Activated CD4-positive, alpha-beta memory T cell treated with anti-CD3 and anti-CD28 coated beads for 36 hours (primary cell): ENCODE measurements at regions of chr2 and their contacts with region 1.

Region 1: GRCh38 chr2:64214281-64215115 is 70.3 kb upstream of the PELI1 start:
- DNase-seq: peak; percentile 59
- H3K4me3 Mint-ChIP-seq: peak overlapping the region; percentile 63
- H3K27ac Mint-ChIP-seq: peak overlapping the region; percentile 97
- H3K4me1 Mint-ChIP-seq: peaks cover 56% of the 10 kb centered on the region
- H3K27me3 Mint-ChIP-seq: no peaks in the 10 kb centered on the region

Region 2: DNA sequence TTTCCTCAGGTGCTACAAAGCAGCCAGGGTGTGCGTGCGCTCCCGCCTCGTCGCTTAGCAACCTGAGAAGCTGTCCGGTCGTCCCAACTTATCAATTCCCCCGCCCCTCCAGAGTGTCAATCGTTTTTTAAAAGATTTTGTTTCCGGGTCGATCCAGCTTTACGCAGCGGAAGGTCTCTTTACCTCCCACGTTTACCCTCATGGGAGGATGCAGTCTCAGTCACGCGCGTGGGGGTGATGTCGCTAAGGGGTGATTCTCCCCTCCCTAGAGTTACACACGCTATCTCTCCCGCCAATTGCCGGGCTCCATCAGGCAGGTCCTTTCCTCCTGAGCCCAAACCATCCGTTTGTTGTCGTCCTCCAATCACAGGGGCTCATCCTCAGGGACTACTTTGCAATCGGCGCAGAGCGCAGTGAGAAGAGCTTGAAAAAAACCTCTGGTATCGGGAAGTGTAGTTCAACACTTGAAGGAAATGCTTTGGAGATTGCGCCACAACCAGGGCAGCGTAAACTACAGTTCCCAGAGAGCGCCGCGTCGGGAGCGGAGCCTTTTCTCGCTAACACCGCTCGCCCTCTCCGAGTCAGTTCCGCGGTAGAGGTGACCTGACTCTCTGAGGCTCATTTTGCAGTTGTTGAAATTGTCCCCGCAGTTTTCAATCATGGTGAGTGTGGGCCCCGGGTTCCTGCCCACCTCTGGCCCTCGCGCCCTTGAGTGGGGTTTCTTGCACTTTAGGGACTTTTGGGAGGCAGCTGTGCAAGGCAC is 625.9 kb before region 1 on chr2 and contains the starts of genes MDH1 and WDPCP:
- CTCF ChIA-PET with region 1: no interaction called
- POLR2A ChIA-PET with region 1: interaction called, 3 read pairs
- intact Hi-C with region 1: loop called (anchors 2 kb)
- DNase-seq: peak; percentile 97
- H3K4me3 Mint-ChIP-seq: peak within 1 kb of the TSS; percentile 99
- H3K27ac Mint-ChIP-seq: peak within 1 kb of the TSS; percentile 92
- H3K4me1 Mint-ChIP-seq: peaks cover 35% of the 10 kb centered on the region
- H3K27me3 Mint-ChIP-seq: no peaks in the 10 kb centered on the region
- total RNA-seq, gene MDH1: 261 to 268 TPM
- total RNA-seq, gene WDPCP: 4.4 to 5.0 TPM

Region 3: DNA sequence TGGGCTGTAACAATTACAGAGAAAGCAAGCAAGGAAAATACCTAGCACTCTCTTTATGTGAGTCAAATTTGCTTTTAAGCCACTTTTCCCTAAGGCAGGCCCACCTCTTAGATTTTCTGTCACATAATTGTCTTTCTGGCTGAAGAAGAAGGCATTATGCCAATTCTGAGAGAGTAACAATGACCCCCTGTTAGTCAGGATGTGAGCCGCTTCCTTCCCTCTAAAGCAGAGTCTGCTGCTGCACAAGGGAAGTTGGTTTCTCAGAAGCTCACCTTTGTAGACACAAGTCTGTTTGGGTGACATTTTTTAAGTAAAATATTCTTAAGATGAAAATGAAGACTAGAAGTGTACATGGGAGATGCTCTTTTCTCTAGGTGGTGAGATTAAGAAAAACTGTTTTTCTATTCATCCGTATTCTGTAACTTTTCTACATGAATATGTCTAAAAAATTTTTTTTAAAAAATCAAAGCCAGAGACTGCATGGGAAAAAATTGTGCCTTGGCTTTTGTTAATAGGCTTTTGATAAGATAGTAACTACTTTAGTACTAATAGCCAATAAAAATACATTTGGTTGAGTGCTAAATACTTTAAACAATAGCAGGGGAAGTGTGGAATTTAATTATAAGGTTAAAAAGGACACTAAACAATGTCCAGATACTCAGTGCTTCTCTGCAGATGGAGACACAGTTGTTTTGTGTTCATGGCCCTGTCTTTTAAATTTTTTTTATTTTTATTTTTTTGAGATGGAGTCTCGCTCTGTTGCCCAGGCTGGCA is 161.8 kb before region 1 on chr2:
- CTCF ChIA-PET with region 1: interaction called, 6 read pairs
- POLR2A ChIA-PET with region 1: interaction called, 3 read pairs
- intact Hi-C with region 1: loop called (anchors 1 kb)
- DNase-seq: no peak
- H3K4me3 Mint-ChIP-seq: no peak overlapping the region
- H3K27ac Mint-ChIP-seq: no peak overlapping the region
- H3K4me1 Mint-ChIP-seq: peaks cover 36% of the 10 kb centered on the region
- H3K27me3 Mint-ChIP-seq: no peaks in the 10 kb centered on the region

Region 4: GRCh38 chr2:64133828-64134227 is 80.7 kb before region 1 on chr2:
- CTCF ChIA-PET with region 1: interaction called, 11 read pairs
- POLR2A ChIA-PET with region 1: interaction called, 25 read pairs
- intact Hi-C with region 1: loop called (anchors 1 kb)
- DNase-seq: no peak
- H3K4me3 Mint-ChIP-seq: peak overlapping the region; percentile 12
- H3K27ac Mint-ChIP-seq: peak overlapping the region; percentile 83
- H3K4me1 Mint-ChIP-seq: peaks cover 84% of the 10 kb centered on the region
- H3K27me3 Mint-ChIP-seq: no peaks in the 10 kb centered on the region

Region 5: DNA sequence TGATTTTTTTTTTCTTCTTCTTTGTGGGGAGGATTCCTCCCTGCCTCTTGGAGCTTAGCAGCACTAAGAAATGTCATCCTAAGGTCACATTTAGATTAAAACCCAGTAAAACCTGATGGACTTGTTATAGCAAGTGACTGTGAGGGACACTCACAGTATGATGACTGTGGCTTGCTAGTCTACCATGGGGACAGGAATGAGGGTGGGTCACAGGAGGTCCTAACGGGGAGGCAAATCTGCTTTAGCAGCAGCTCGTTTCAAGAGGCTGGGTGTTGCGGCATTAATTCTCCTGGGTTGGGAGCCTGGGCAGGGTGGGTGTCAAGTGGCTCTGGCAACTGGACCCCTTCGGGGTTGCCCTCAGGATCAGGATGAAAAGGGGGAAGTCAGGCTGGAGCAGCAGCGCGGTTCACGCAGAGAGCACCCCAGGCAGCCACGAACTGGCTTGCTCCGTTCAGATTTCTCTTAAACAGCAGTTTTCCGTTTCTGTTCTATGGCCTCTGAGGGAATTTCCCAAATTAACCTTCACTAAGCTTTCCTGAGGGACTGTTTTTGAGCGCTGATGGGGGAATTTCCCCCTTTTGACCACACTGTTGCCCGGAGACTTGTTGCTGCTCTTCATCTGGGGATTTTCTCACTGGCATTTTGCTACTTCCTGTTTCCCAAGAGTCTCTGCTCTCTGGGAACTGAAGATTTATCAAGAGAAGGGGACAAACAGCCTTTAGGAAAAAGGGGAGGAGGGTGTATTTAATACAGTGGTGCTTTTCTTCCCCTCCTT is 10.5 kb before region 1 on chr2:
- CTCF ChIA-PET with region 1: interaction called, 18 read pairs
- POLR2A ChIA-PET with region 1: interaction called, 44 read pairs
- intact Hi-C with region 1: loop called (anchors 1 kb)
- DNase-seq: peak; percentile 69
- H3K4me3 Mint-ChIP-seq: peak overlapping the region; percentile 71
- H3K27ac Mint-ChIP-seq: peak overlapping the region; percentile 87
- H3K4me1 Mint-ChIP-seq: peaks cover 83% of the 10 kb centered on the region
- H3K27me3 Mint-ChIP-seq: no peaks in the 10 kb centered on the region

Region 6: GRCh38 chr2:64273524-64274398 is 59.3 kb after region 1 on chr2:
- CTCF ChIA-PET with region 1: no interaction called
- POLR2A ChIA-PET with region 1: no interaction called
- intact Hi-C with region 1: loop called (anchors 2 kb)
- DNase-seq: no peak
- H3K4me3 Mint-ChIP-seq: no peak overlapping the region
- H3K27ac Mint-ChIP-seq: no peak overlapping the region
- H3K4me1 Mint-ChIP-seq: peaks cover 23% of the 10 kb centered on the region
- H3K27me3 Mint-ChIP-seq: no peaks in the 10 kb centered on the region